Gastrocnemius medialis (tissue), 4 donors: ENCODE measurements at regions of chr5 and their contacts with region 1.

Region 1: DNA sequence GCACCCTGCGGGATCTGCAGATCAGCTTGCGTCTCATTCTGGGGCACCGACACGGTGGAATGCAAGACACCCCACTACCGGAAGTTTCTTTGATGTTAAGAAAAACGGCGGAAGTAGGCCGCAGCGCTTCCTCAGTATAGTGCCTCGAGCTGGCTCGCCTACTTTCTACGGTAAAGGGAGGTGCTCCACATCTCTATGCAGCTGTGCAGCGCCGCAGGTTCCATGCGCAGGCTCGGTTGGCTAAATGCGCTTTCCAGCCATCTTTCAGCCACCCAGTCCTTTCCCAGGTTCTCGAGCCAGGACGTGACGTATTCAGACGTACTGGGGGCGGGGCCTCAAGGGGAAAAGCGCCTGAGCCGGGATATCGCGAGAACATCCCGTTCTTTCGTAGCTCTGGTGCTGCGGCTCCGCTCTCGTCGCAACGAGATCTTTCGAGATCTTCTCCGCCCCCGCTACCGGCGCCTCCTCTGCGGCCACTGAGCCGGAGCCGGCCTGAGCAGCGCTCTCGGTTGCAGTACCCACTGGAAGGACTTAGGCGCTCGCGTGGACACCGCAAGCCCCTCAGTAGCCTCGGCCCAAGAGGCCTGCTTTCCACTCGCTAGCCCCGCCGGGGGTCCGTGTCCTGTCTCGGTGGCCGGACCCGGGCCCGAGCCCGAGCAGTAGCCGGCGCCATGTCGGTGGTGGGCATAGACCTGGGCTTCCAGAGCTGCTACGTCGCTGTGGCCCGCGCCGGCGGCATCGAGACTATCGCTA is at the start of gene HSPA4:
- DNase-seq: peak; percentile 96 to 97
- ATAC-seq: peak; percentile 91 to 95
- H3K4me3 ChIP-seq: peak within 1 kb of the TSS; percentile 82 to 97 (median 94)
- H3K27ac ChIP-seq: peak within 1 kb of the TSS; percentile 92 to 100 (median 98)
- H3K4me1 ChIP-seq: peaks cover 46 to 51% of the 10 kb centered on the region in 2 donors
- H3K27me3 ChIP-seq: no peaks in the 10 kb centered on the region
- CTCF ChIP-seq: no peak
- POLR2A ChIP-seq: peak; percentile 94 to 95
- total RNA-seq, gene HSPA4: 62.6 to 96.4 (median 74.1) TPM

Region 2: GRCh38 chr5:132829742-132830435 is 221.9 kb before region 1 on chr5:
- in situ Hi-C with region 1: no loop called
- intact Hi-C with region 1: loop called (anchors 5 kb)
- DNase-seq: peak; percentile 29 to 50
- ATAC-seq: peak; percentile 91 to 92
- H3K4me3 ChIP-seq: peak overlapping the region; percentile 53 to 72 (median 56)
- H3K27ac ChIP-seq: peak overlapping the region; percentile 12 to 78 (median 74)
- H3K4me1 ChIP-seq: no peaks in the 10 kb centered on the region
- H3K27me3 ChIP-seq: peaks cover 0 to 3% (median 0%) of the 10 kb centered on the region in 3 donors
- CTCF ChIP-seq: peak; percentile 72 to 95 (median 85)
- POLR2A ChIP-seq: no peak

Region 3: DNA sequence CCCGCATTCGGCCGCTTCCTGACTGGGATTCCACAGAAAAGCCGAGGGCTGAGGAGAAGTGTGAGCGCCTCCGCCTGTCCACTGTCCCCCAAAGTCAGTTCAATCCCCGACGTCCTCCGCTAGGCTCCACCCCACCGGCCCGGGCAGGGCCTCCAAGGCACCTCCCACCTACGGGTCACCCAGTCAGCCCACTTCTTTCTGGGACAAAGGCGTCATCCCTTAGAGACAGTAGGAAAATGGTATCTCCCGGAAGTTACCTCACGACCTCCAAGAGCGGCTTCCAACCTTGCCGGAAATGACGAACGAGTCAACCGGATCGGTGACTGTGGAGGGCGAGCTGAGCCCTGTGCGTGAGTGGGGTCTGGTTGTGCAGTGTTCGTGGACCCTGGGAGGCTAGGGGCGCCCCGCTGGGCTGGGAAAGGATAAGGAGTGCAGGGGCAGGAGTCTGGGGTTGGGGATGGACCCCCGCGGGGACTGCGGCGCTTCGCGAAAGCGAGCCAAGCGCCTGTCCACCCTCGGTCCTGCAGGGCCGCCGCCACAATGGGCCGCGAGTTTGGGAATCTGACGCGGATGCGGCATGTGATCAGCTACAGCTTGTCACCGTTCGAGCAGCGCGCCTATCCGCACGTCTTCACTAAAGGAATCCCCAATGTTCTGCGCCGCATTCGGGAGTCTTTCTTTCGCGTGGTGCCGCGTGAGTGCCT is 185.3 kb before region 1 on chr5 and contains the starts of genes GDF9 and UQCRQ:
- in situ Hi-C with region 1: no loop called
- intact Hi-C with region 1: loop called (anchors 1 kb)
- DNase-seq: peak; percentile 95 to 96
- ATAC-seq: peak; percentile 99
- H3K4me3 ChIP-seq: peak within 1 kb of the TSS; percentile 63 to 92 (median 85)
- H3K27ac ChIP-seq: peak within 1 kb of the TSS; percentile 83 to 93 (median 88)
- H3K4me1 ChIP-seq: peaks cover 27 to 31% of the 10 kb centered on the region in 2 donors
- H3K27me3 ChIP-seq: no peaks in the 10 kb centered on the region
- CTCF ChIP-seq: no peak
- POLR2A ChIP-seq: peak; percentile 91 to 93
- total RNA-seq, gene GDF9: 0.13 to 2.5 (median 0.46) TPM in 3 of 4 donors, not detected in the other
- total RNA-seq, gene UQCRQ: 273 to 566 (median 326) TPM

Region 4: GRCh38 chr5:133015466-133015865 is 36.3 kb before region 1 on chr5:
- in situ Hi-C with region 1: no loop called
- intact Hi-C with region 1: no loop called
- DNase-seq: no peak
- ATAC-seq: no peak
- H3K4me3 ChIP-seq: no peak overlapping the region
- H3K27ac ChIP-seq: no peak overlapping the region
- H3K4me1 ChIP-seq: no peaks in the 10 kb centered on the region
- H3K27me3 ChIP-seq: no peaks in the 10 kb centered on the region
- CTCF ChIP-seq: no peak
- POLR2A ChIP-seq: no peak

Region 5: DNA sequence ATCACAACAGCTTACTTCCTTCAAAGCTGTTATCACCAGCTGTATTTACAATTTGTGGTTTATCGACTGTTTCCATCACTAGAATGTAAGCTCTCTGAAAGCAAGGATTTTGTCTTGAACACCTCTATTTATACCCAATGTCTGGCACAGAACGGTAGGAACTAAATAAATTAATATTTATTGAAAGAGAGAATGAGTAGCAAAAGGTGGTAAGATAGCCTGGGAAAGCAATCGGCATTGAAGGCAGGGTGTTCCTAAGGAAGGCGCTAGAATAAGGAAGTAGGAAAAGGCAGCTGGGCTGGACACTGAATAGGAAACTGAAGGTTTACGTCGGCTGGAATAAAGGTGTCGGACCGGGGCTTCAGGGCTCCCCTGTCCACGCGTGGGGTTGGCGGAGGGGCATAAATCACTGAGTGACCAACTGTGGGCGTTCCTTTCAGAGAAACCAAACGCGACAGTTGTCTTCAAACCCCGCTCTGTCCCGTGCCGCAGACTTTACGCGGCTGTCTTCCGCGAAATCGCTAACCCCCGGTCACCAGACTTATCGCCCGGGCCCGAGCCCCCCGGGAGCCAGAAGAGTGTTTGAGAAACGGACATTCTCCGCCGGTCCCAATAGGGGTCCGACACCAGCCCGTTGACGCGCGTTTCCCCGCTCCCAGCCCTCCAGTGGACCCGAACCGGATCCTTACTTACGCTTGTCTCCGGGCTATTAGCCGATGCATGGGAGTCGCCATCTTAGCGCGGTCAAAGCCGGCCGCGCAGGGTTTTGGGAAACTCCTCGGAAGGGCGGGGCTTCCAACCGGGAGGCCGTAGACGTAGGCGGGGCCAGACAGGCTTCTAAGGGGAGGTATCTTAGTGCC is 25.7 kb before region 1 on chr5 and contains the start of gene ZCCHC10:
- in situ Hi-C with region 1: no loop called
- intact Hi-C with region 1: loop called (anchors 1 kb)
- DNase-seq: peak; percentile 83 to 86
- ATAC-seq: peak; percentile 98
- H3K4me3 ChIP-seq: peak within 1 kb of the TSS; percentile 75 to 100 (median 92)
- H3K27ac ChIP-seq: peak within 1 kb of the TSS; percentile 90 to 99 (median 97)
- H3K4me1 ChIP-seq: peaks cover 11 to 15% of the 10 kb centered on the region in 2 donors
- H3K27me3 ChIP-seq: no peaks in the 10 kb centered on the region
- CTCF ChIP-seq: no peak
- POLR2A ChIP-seq: peak; percentile 73 to 83
- total RNA-seq, gene ZCCHC10: 8.9 to 28.9 (median 18.5) TPM